Breast epithelium (tissue), 4 donors: ENCODE measurements at regions of chr1 and their contacts with region 1.

Region 1: GRCh38 chr1:225923692-225924555 is at the start of gene PYCR2:
- DNase-seq: peak; percentile 91 to 93
- H3K4me3 ChIP-seq: peak within 1 kb of the TSS; percentile 88 to 93 (median 89)
- H3K27ac ChIP-seq: peak within 1 kb of the TSS; percentile 95
- H3K4me1 ChIP-seq: peaks cover 0 to 19% of the 10 kb centered on the region in 2 donors
- H3K27me3 ChIP-seq: no peaks in the 10 kb centered on the region
- CTCF ChIP-seq: no peak
- POLR2A ChIP-seq: peak; percentile 77
- total RNA-seq, gene PYCR2: 40.2 to 49.3 (median 47.9) TPM

Region 2: GRCh38 chr1:224668984-224669383 is 1254.9 kb before region 1 on chr1:
- intact Hi-C with region 1: no loop called
- DNase-seq: peak in 1 of 2 donors; percentile 34
- H3K4me3 ChIP-seq: no peak overlapping the region
- H3K27ac ChIP-seq: no peak overlapping the region
- H3K4me1 ChIP-seq: no peaks in the 10 kb centered on the region
- H3K27me3 ChIP-seq: no peaks in the 10 kb centered on the region
- CTCF ChIP-seq: no peak
- POLR2A ChIP-seq: no peak

Region 3: DNA sequence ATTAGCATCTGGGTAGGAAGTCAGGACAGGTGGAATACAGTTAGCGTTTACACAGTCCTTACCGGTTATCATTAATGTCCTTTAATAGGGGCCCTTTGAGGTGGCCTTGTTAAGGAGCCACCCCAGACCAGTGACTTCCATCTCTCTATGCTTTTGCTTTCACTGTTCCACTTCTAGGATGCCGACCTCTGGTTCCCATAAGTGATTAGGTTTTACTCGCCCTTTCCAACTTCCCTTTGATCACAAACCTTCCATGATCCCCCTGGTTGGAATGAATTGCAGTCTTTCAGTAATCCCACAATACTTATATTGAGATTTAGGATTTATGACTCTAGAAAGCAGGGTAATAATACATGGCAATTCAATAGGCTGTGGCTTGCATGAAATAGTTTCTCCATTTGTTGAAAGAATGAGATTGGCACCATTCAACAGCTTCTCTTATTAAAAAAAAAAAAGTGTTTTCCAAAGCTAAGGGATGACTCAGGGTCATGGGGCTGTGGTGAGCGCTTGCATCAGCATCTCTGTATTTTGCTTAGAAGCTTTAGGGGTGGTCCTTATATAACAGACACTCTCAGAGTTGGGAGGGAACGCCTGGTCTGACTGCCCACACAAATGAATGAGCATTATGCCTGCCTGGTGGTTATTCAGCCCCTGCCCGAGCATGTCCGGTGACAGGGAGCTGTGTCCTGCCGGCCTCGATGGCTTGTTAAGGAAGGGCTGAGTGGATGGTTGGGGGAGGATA is 1197.3 kb before region 1 on chr1:
- intact Hi-C with region 1: no loop called
- DNase-seq: peak in 1 of 2 donors; percentile 46
- H3K4me3 ChIP-seq: no peak overlapping the region
- H3K27ac ChIP-seq: peak overlapping the region; percentile 61 to 75
- H3K4me1 ChIP-seq: peaks cover 0 to 4% of the 10 kb centered on the region in 2 donors
- H3K27me3 ChIP-seq: no peaks in the 10 kb centered on the region
- CTCF ChIP-seq: no peak
- POLR2A ChIP-seq: no peak

Region 4: DNA sequence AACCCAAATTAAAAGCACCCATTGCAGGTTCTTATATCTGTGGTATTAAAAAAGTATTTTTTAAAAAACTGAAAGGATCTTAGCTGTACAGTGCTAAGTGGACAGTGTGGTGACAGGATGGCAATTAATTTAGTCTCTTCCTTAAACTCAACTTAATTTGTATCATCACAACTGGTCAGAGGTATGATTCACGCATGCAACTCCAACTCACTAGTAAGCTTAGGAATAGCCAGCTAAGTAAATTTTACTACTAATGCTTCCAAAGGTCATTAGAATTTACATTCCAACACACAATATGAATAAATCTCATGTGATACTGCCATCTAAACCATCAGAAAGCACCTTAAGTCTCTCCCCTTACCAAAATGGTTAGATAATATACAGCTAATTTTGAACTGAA is 306.4 kb before region 1 on chr1:
- intact Hi-C with region 1: loop called (anchors 5 kb)
- DNase-seq: no peak
- H3K4me3 ChIP-seq: no peak overlapping the region
- H3K27ac ChIP-seq: peak overlapping the region; percentile 31 to 39
- H3K4me1 ChIP-seq: no peaks in the 10 kb centered on the region
- H3K27me3 ChIP-seq: no peaks in the 10 kb centered on the region
- CTCF ChIP-seq: no peak
- POLR2A ChIP-seq: no peak

Region 5: DNA sequence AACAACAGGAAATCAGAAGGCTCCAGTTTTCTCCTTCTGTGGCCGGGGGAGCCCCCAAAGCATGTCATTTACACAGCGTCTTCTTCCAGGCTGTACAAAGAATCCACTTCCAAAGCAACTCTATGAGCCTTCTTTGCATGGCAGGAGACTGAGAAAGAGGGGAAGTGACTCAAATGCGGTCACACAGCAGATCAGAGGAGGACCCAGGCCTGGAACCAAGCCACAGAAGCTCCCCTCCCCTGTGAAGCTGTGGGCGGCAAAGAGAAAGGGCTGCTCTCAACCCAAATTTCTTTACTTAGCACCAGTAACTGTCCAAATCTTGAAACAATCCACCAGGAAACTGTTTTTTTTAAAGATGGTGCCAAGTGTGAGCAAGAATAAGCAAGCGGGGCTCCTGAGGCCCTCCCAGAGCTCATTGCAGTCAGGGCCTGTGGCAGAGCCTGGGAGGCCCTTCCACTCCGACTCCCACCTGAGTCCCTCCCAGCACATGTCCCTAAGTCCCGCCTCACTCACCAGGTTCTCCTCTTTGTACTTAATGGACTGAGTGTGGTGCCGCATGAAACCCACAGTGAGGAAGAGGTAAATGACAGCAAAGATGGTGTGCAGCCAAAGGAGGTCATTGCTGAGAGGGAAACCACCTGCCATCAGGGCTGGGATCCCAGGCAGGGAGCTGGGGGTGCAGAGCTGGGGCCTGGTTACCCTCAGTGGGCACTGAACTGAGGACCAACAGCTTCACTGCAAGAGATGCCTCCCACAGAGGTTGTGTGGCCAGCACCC is 57.7 kb before region 1 on chr1:
- intact Hi-C with region 1: loop called (anchors 2 kb)
- DNase-seq: no peak
- H3K4me3 ChIP-seq: no peak overlapping the region
- H3K27ac ChIP-seq: no peak overlapping the region
- H3K4me1 ChIP-seq: no peaks in the 10 kb centered on the region
- H3K27me3 ChIP-seq: no peaks in the 10 kb centered on the region
- CTCF ChIP-seq: no peak
- POLR2A ChIP-seq: no peak

Region 6: DNA sequence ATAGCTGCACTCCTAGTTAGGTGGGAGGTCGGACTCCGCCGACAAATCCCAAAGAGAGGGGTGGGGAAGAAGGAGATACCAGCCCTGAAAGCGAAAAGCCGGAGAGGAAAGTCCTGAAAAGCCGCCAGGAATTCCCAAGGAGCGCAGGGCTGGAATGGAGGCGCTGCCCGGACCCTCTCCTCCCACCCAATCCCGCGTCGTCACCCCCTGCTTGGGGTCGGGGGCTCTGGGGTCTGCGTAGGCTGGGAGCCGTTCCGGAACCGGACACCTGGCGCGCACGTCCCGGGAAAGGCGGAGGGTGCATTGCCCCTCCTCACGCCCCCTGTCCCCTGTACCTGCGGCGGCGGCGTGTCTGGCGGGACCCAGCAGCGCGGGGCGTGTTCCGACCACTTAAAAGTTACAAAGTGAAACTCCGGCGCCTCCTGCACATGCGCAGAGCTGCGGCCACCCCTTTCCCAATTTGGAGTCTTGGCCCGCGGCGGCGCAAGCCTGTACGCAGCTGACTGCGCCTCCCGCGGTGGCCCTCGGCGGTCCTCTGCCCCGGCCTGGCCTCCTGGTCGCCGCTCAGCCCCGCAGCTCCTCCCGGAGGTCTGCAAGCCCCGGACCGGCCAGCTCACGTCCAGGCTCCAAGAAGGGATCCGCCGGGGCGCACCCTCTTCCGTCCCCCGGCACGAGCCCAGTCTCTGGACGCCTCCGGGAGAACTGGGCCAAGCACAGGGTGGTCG is 41.8 kb before region 1 on chr1 and contains the start of gene TMEM63A:
- intact Hi-C with region 1: loop called (anchors 5 kb)
- DNase-seq: peak; percentile 83 to 88
- H3K4me3 ChIP-seq: peak within 1 kb of the TSS; percentile 92 to 98 (median 95)
- H3K27ac ChIP-seq: peak within 1 kb of the TSS; percentile 96 to 98
- H3K4me1 ChIP-seq: peaks cover 9 to 14% of the 10 kb centered on the region in 2 donors
- H3K27me3 ChIP-seq: no peaks in the 10 kb centered on the region
- CTCF ChIP-seq: peak in 2 of 3 donors; percentile 40
- POLR2A ChIP-seq: peak; percentile 70
- total RNA-seq, gene TMEM63A: 69.6 to 88.0 (median 80.6) TPM

Region 7: DNA sequence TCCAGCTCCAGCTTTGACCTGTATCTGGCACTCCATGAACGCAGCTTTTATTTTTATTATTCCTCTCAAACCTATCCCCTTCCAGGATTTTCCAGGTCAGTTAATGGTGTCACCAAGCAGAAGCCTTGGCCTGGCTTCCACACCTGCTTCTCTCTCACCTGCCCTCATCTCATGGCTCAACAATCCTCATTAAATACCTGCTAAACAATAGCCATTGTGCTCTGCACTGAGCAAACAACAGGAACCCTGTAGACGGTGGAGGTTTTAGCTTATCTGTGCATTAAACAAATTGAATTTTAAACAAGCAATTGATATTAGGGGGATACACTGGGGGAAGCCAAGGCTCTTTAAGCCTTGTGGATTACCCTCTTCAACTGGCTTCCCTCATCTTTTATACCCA is 15.2 kb before region 1 on chr1:
- intact Hi-C with region 1: no loop called
- DNase-seq: no peak
- H3K4me3 ChIP-seq: no peak overlapping the region
- H3K27ac ChIP-seq: peak overlapping the region in 1 of 2 donors; percentile 46
- H3K4me1 ChIP-seq: no peaks in the 10 kb centered on the region
- H3K27me3 ChIP-seq: no peaks in the 10 kb centered on the region
- CTCF ChIP-seq: no peak
- POLR2A ChIP-seq: no peak

Region 8: GRCh38 chr1:226381226-226381998 is 457.5 kb after region 1 on chr1:
- intact Hi-C with region 1: no loop called
- DNase-seq: no peak
- H3K4me3 ChIP-seq: no peak overlapping the region
- H3K27ac ChIP-seq: no peak overlapping the region
- H3K4me1 ChIP-seq: no peaks in the 10 kb centered on the region
- H3K27me3 ChIP-seq: no peaks in the 10 kb centered on the region
- CTCF ChIP-seq: no peak
- POLR2A ChIP-seq: no peak